CD8-positive, alpha-beta T cell (primary cell): ENCODE measurements at regions of chr18 and their contacts with region 1.

Region 1: GRCh38 chr18:28313602-28314001 is 136.7 kb upstream of the CDH2 start:
- DNase-seq: no peak
- ATAC-seq: no peak
- H3K4me3 ChIP-seq: no peak overlapping the region
- H3K4me3 Mint-ChIP-seq: no peak overlapping the region
- H3K27ac ChIP-seq: no peak overlapping the region
- H3K27ac Mint-ChIP-seq: no peak overlapping the region
- H3K4me1 ChIP-seq: no peaks in the 10 kb centered on the region
- H3K4me1 Mint-ChIP-seq: no peaks in the 10 kb centered on the region
- H3K27me3 ChIP-seq: no peaks in the 10 kb centered on the region
- H3K27me3 Mint-ChIP-seq: no peaks in the 10 kb centered on the region
- CTCF ChIP-seq: no peak

Region 2: DNA sequence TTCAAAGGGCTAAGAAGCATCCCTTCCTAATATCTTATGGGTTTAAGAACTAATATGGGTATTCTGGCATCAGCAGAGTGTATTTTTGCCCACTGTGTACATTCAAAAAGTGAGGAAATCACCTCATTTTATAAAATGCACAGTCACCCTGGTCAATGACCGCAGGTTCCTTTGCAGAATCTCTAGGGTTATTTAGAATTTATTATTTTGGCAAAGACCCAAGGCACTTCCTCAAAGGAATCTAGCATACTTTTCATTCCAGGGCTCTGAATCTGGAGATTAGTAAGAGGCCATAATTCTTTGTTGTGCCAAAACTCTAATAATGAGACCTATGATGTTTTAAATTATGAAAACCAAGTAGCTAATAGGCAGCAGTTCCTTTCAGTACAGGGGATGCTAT is 109.4 kb before region 1 on chr18:
- CTCF ChIA-PET with region 1: no interaction called
- POLR2A ChIA-PET with region 1: no interaction called
- intact Hi-C with region 1: no loop called
- DNase-seq: no peak
- ATAC-seq: no peak
- H3K4me3 ChIP-seq: no peak overlapping the region
- H3K4me3 Mint-ChIP-seq: no peak overlapping the region
- H3K27ac ChIP-seq: no peak overlapping the region
- H3K27ac Mint-ChIP-seq: no peak overlapping the region
- H3K4me1 ChIP-seq: no peaks in the 10 kb centered on the region
- H3K4me1 Mint-ChIP-seq: no peaks in the 10 kb centered on the region
- H3K27me3 ChIP-seq: no peaks in the 10 kb centered on the region
- H3K27me3 Mint-ChIP-seq: no peaks in the 10 kb centered on the region
- CTCF ChIP-seq: no peak

Region 3: GRCh38 chr18:28357766-28358401 is 44.3 kb after region 1 on chr18:
- CTCF ChIA-PET with region 1: no interaction called
- POLR2A ChIA-PET with region 1: no interaction called
- intact Hi-C with region 1: loop called in 1 of 2 experiments (anchors 5 kb)
- DNase-seq: no peak
- ATAC-seq: no peak
- H3K4me3 ChIP-seq: no peak overlapping the region
- H3K4me3 Mint-ChIP-seq: no peak overlapping the region
- H3K27ac ChIP-seq: no peak overlapping the region
- H3K27ac Mint-ChIP-seq: no peak overlapping the region
- H3K4me1 ChIP-seq: no peaks in the 10 kb centered on the region
- H3K4me1 Mint-ChIP-seq: no peaks in the 10 kb centered on the region
- H3K27me3 ChIP-seq: no peaks in the 10 kb centered on the region
- H3K27me3 Mint-ChIP-seq: no peaks in the 10 kb centered on the region
- CTCF ChIP-seq: no peak